ENCODE measurements at regions of chr12 and their contacts with region 1.

Region 1: DNA sequence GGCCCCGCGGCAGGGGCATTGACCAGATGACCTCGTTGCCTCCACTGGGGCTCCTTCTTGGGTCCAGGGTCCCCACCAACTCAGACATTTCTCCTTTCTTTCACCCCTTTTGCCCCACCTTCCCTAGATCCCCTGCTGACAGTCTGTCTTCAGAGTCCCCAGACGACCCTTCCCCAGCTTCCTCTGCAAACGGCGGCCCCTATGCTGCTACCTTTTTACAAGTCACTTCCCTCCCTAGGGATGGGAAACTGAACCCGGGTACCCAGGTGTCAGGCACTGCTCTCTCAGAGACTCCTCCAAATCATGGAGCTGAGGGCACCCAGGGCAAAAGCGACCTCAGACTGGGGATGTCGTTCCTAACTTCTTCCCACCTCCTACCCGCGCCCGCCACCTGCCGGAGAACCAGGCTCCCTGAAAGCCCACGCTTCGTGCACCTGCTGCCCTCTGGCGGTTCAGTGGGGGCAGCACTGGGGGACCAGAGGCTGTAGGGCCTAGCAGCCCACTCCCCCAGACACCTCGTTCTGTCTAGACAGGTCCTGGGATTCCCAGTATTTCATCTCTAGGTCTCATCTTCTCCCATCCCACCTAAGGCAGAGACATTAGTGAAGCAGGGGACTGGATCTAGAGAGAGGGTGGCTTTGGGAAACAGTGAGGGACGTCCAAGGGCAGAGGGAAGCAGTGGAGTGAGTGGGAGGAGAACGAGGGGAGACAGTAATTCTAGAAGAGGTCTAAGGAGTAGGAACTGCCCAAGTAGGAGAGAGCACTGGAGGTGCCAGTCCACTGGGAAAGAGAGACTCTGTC is 4.9 kb downstream of the ZNF385A start:
- DNase-seq: peak; percentile 93
- CTCF ChIP-seq: peak; percentile 100

Region 2: GRCh38 chr12:54214553-54215406 is 164.8 kb before region 1 on chr12:
- CTCF ChIA-PET with region 1: interaction called, 35 read pairs
- POLR2A ChIA-PET with region 1: no interaction called
- DNase-seq: peak; percentile 92
- CTCF ChIP-seq: peak; percentile 99

Region 3: DNA sequence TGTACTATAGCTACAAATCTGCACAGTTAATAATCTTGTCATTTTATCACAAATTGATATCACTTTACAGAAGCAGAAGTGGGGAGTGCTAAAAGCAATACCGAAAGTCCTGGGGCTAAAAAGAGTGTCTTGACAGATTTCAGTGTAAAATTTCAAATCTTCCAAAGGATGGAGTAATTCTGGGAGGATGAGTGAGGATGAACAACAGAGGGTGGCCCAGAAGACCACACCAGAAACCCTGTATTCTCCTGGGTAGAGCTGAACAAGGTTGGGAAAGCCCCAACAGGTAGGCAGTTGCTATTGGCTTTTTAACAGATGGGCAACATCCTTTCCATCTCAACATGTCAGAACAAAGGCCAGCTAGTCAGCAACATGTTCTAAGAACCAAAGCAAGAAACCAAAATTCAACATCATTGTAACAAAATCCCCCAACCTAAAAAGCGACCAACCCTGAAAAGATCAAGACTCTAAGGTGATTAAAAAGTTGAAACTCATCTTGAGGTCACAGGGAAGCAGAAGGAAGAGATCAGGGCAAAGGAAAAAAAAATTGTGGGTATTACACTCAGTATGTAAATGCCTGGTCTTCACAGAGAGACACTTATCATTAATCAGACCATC is 138.5 kb before region 1 on chr12:
- CTCF ChIA-PET with region 1: interaction called, 10 read pairs
- POLR2A ChIA-PET with region 1: no interaction called
- DNase-seq: no peak
- CTCF ChIP-seq: no peak

Region 4: DNA sequence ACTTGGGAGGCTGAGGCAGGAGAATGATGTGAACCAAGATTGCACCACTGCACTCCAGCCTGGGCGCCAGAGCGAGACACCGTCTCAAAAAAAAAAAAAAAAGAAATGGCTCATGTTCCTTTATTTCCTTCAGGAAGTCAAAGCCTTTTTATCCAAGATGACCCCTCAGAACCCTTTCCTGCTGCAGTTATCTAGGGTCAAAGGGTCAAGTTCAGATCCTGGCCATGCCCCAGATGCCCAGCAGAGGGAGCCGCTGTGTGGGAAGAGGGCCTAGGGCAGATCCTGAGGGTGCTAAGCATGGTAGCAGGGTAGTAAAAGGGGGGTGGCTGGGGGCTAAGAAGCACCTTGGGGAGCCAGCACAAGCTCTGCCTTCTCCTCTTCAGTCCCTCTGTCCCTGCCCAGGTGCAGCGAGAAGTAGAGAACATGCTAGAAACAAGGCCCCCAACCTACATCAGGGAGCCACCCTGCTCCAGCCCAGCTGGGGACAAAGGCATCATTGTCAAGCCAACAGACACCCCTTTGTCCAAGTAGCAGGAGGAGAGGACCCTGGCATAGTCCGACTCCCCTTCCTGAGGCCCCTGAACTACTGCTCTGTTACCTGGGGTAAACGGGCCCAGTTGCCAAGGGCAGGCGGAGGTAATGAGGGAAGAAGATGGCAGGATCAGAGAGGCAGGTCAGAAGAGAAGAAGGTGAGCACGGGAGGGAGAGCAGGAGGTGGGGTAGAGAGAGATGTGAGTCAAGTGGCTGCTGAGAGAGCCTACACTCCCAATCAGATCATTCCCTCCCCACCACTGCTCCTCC is 85.2 kb before region 1 on chr12:
- CTCF ChIA-PET with region 1: interaction called, 33 read pairs
- POLR2A ChIA-PET with region 1: no interaction called
- DNase-seq: peak; percentile 79
- CTCF ChIP-seq: peak; percentile 91

Region 5: DNA sequence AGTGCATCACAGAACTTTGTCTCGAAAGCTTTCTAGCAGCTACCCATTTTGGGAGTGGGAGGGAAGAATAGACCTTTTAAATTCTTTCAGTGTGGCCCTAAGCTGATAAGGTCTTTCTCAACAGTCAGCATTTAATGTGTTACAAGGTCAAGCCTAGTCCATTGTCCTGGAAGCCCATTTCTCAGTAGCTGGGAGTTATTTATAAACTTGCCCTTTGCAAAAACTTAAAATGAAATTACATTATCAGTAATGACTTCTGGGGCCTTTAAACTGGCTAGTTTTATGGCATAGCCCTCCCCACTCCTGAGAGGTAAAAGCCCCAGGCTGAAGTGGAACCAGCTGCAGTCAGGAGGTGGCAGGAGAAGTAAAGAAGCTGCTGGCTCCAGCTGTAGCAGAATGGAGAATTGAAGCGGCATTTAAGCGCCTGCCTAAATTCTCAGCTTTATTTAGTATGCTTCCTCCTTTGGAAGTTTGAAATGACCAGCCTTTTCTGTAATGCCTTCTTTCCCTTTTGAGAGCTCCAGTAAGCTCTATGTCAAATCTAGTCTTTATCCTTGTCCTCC is 42.2 kb before region 1 on chr12:
- CTCF ChIA-PET with region 1: interaction called, 48 read pairs
- POLR2A ChIA-PET with region 1: no interaction called
- DNase-seq: no peak
- CTCF ChIP-seq: no peak

Region 6: GRCh38 chr12:54398995-54399793 is 19.6 kb after region 1 on chr12:
- CTCF ChIA-PET with region 1: interaction called, 95 read pairs
- POLR2A ChIA-PET with region 1: no interaction called
- DNase-seq: peak; percentile 84
- CTCF ChIP-seq: peak; percentile 100

Measured in GM10248 (cell line).